Naive thymus-derived CD8-positive, alpha-beta T cell (primary cell): ENCODE measurements at regions of chr19 and their contacts with region 1.

Region 1: GRCh38 chr19:506404-507285 is 652 bp upstream of the TPGS1 start:
- DNase-seq: peak; percentile 87 to 99 (median 94)
- ATAC-seq: peak; percentile 53 to 56
- H3K4me3 Mint-ChIP-seq: peak overlapping the region; percentile 88 to 100 (median 98)
- H3K27ac Mint-ChIP-seq: peak overlapping the region; percentile 95 to 100 (median 99)
- H3K4me1 Mint-ChIP-seq: peaks cover 18 to 52% (median 38%) of the 10 kb centered on the region in 4 donors
- H3K27me3 Mint-ChIP-seq: no peaks in the 10 kb centered on the region

Region 2: DNA sequence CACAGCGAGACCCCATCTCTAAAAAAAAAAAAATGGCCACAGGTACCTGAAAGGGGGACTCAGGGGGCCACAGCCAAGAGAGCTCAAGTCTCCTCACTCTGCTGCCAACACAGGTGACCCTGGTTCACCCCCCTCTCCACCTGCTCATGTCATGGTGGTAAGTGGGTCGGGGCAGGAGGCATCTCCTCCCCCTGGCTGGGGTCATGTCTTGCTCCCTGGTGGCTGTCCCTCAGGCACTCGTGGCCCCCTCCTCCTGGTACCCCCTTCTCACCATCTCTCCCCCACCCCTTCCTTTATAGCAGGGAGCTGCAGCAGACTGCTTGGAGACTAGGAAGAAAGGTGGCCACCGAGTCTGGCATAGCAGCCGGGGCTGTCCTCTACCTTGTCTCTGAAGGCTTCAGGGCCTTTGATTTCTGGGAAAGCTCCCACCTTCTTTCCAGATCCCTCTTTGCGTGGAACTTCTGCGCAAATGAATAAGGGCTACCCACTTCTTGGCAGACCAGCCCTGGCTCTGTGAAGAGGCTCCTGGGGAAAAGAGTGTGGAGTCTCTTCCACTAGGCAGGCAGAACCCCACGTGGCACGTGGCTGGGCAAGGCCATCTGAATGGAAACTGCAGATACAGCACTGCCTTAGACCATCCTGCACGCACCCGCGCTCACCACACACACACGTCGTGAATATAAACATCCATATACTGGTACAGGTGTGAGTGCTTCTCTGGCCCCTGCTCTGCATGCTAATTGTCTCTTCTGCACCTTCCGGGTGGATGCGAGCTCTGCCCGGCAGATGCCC is 142.0 kb before region 1 on chr19:
- POLR2A ChIA-PET with region 1: no interaction called
- DNase-seq: no peak
- ATAC-seq: no peak
- H3K4me3 Mint-ChIP-seq: no peak overlapping the region
- H3K27ac Mint-ChIP-seq: no peak overlapping the region
- H3K4me1 Mint-ChIP-seq: no peaks in the 10 kb centered on the region
- H3K27me3 Mint-ChIP-seq: peaks cover 9 to 32% (median 16%) of the 10 kb centered on the region in 5 donors

Region 3: GRCh38 chr19:419266-419671 is 87.4 kb before region 1 on chr19:
- POLR2A ChIA-PET with region 1: no interaction called
- DNase-seq: no peak
- ATAC-seq: no peak
- H3K4me3 Mint-ChIP-seq: no peak overlapping the region
- H3K27ac Mint-ChIP-seq: no peak overlapping the region
- H3K4me1 Mint-ChIP-seq: no peaks in the 10 kb centered on the region
- H3K27me3 Mint-ChIP-seq: peaks cover 0 to 3% (median 0%) of the 10 kb centered on the region in 5 donors

Region 4: DNA sequence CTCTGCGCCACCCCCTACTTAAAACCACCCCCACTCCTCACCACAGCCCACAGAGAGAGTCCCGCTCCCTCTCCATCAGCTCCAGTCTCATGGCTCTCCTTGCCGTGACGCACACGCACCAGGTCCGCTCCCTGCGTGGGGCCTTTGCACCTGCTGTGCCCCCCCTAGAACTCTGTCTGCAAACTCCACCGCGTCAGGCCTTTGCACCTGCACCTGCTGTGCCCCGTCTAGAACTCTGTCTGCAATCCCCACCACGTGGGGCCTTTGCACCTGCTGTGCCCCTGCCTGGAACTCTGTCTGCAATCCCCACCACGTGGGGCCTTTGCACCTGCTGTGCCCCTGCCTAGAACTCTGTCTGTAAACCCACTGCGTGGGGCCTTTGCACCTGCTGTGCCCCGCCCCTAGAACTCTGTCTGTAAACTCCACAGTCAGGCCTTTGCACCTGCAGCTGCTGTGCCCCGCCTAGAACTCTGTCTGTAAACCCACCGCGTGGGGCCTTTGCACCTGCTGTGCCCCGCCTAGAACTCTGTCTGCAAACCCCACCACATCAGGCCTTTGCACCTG is 50.0 kb before region 1 on chr19:
- POLR2A ChIA-PET with region 1: no interaction called
- DNase-seq: no peak
- ATAC-seq: no peak
- H3K4me3 Mint-ChIP-seq: no peak overlapping the region
- H3K27ac Mint-ChIP-seq: peak overlapping the region in 1 of 10 donors; percentile 31
- H3K4me1 Mint-ChIP-seq: peaks cover 1 to 16% (median 11%) of the 10 kb centered on the region in 4 donors
- H3K27me3 Mint-ChIP-seq: peaks cover 0 to 13% (median 5%) of the 10 kb centered on the region in 5 donors

Region 5: DNA sequence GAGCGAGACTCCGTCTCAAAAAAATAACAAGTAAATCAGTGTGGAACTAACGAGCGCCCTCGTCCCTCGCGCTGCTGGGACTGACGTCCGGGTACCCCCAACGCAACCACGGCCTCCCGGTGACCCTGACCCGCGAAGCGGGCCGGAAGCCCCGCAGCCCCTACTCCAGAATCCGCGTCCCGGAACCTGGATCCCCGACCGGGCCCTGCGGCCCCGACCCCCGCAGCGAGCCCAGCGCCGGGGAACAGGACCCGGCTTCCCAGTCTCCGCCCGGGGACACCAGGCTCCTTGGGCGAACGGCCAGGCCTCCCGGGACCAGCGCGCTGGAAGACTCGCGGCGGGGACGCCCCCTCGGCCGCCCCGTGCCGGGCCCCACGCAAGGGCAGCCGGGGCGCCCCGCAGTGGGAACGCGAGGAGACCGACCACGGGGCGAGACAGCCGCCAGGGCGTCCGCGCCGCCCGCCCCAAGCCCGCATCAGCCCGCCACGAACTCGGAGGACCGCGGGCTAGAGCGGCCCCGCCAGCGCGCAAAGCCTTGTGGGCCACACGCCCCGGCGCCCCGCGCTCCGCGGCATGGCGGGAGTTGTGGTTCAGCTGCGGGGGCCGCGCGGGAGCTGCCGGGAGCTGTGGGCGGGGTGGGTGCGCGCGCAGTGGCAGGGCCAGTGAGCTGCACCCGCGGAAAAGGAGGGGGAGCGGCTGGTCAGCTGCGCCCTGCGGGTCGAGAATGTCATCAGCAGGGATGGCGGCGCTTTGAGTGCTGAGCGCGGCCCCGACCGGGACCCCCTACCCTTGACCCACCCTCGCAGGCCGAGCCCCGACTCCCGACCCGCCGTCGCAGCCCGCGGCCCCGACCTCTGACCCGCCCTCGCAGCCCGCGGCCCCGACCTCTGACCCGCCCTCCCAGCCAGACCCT is 17.9 kb before region 1 on chr19:
- POLR2A ChIA-PET with region 1: interaction called, 51 read pairs
- DNase-seq: peak; percentile 83 to 94 (median 90)
- ATAC-seq: peak; percentile 96
- H3K4me3 Mint-ChIP-seq: peak overlapping the region; percentile 70 to 88 (median 78)
- H3K27ac Mint-ChIP-seq: peak overlapping the region; percentile 36 to 95 (median 81)
- H3K4me1 Mint-ChIP-seq: peaks cover 5 to 19% (median 10%) of the 10 kb centered on the region in 4 donors
- H3K27me3 Mint-ChIP-seq: peaks cover 3 to 25% (median 8%) of the 10 kb centered on the region in 5 donors

Region 6: DNA sequence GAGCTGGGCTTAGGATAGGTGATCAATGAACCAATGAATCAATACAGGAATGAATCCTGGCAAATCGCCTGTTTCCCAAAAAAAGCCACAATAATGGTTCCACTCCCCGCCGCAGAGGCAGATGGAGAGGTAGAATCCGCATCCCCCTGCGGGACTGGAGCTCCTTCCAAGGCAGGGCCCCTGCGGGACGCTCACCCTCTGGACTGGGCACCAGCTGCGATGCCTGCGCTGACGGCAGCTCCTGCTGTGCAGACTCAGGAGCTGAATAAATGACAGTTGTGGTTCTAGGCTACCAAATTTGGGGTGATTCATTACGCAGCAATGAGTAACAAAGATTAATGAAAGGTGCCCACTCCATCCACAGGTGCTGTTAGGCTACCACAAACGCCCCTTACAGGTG is 16.1 kb after region 1 on chr19:
- POLR2A ChIA-PET with region 1: interaction called, 11 read pairs
- DNase-seq: peak in 1 of 10 donors; percentile 61
- ATAC-seq: no peak
- H3K4me3 Mint-ChIP-seq: peak overlapping the region in 2 of 10 donors; percentile 12 to 49
- H3K27ac Mint-ChIP-seq: no peak overlapping the region
- H3K4me1 Mint-ChIP-seq: peaks cover 0 to 8% (median 4%) of the 10 kb centered on the region in 4 donors
- H3K27me3 Mint-ChIP-seq: peaks cover 0 to 1% (median 0%) of the 10 kb centered on the region in 5 donors